T-cell (primary cell): ENCODE measurements at regions of chr12 and their contacts with region 1.

Region 1: GRCh38 chr12:108664338-108665258 is 30.9 kb upstream of the SELPLG start:
- DNase-seq: peak; percentile 63 to 89 (median 77)
- ATAC-seq: peak; percentile 99 to 100 (median 99)
- H3K4me3 ChIP-seq: no peak overlapping the region
- H3K4me3 Mint-ChIP-seq: no peak overlapping the region
- H3K27ac ChIP-seq: peak overlapping the region; percentile 44
- H3K27ac Mint-ChIP-seq: peak overlapping the region; percentile 93 to 94
- H3K4me1 ChIP-seq: no peaks in the 10 kb centered on the region
- H3K4me1 Mint-ChIP-seq: peaks cover 8 to 17% (median 8%) of the 10 kb centered on the region in 3 donors
- H3K27me3 ChIP-seq: no peaks in the 10 kb centered on the region
- H3K27me3 Mint-ChIP-seq: no peaks in the 10 kb centered on the region

Region 2: GRCh38 chr12:108548954-108549521 is 115.6 kb before region 1 on chr12:
- CTCF ChIA-PET with region 1: no interaction called
- POLR2A ChIA-PET with region 1: interaction called in 1 of 2 experiments, 11 read pairs
- DNase-seq: no peak
- ATAC-seq: no peak
- H3K4me3 ChIP-seq: no peak overlapping the region
- H3K4me3 Mint-ChIP-seq: no peak overlapping the region
- H3K27ac ChIP-seq: no peak overlapping the region
- H3K27ac Mint-ChIP-seq: peak overlapping the region in 1 of 2 donors; percentile 23
- H3K4me1 ChIP-seq: peaks cover 0 to 4% of the 10 kb centered on the region in 2 experiments
- H3K4me1 Mint-ChIP-seq: peaks cover 50 to 51% (median 51%) of the 10 kb centered on the region in 3 donors
- H3K27me3 ChIP-seq: no peaks in the 10 kb centered on the region
- H3K27me3 Mint-ChIP-seq: no peaks in the 10 kb centered on the region

Region 3: GRCh38 chr12:108633534-108634248 is 30.9 kb before region 1 on chr12 and contains the start of gene SELPLG:
- CTCF ChIA-PET with region 1: interaction called, 4 to 15 read pairs
- POLR2A ChIA-PET with region 1: interaction called in 1 of 2 experiments, 4 read pairs
- DNase-seq: peak; percentile 78 to 95 (median 90)
- ATAC-seq: peak; percentile 78 to 82 (median 79)
- H3K4me3 ChIP-seq: peak within 1 kb of the TSS; percentile 93 to 94
- H3K4me3 Mint-ChIP-seq: peak within 1 kb of the TSS; percentile 100
- H3K27ac ChIP-seq: peak within 1 kb of the TSS; percentile 94
- H3K27ac Mint-ChIP-seq: peak within 1 kb of the TSS; percentile 99 to 100
- H3K4me1 ChIP-seq: peaks cover 38 to 77% of the 10 kb centered on the region in 2 experiments
- H3K4me1 Mint-ChIP-seq: peaks cover 68 to 75% (median 69%) of the 10 kb centered on the region in 3 donors
- H3K27me3 ChIP-seq: no peaks in the 10 kb centered on the region
- H3K27me3 Mint-ChIP-seq: no peaks in the 10 kb centered on the region
- total RNA-seq, gene SELPLG: 102 to 220 (median 215) TPM

Region 4: GRCh38 chr12:108803428-108804105 is 139.0 kb after region 1 on chr12:
- CTCF ChIA-PET with region 1: interaction called, 74 to 99 read pairs
- POLR2A ChIA-PET with region 1: interaction called in 1 of 2 experiments, 5 read pairs
- DNase-seq: peak; percentile 22 to 87 (median 53)
- ATAC-seq: peak; percentile 86 to 92 (median 89)
- H3K4me3 ChIP-seq: no peak overlapping the region
- H3K4me3 Mint-ChIP-seq: no peak overlapping the region
- H3K27ac ChIP-seq: no peak overlapping the region
- H3K27ac Mint-ChIP-seq: peak overlapping the region in 1 of 2 donors; percentile 36
- H3K4me1 ChIP-seq: peaks cover 0 to 2% of the 10 kb centered on the region in 2 experiments
- H3K4me1 Mint-ChIP-seq: peaks cover 4% of the 10 kb centered on the region in 3 donors
- H3K27me3 ChIP-seq: no peaks in the 10 kb centered on the region
- H3K27me3 Mint-ChIP-seq: no peaks in the 10 kb centered on the region